CD4-positive, alpha-beta T cell (primary cell): ENCODE measurements at regions of chr9 and their contacts with region 1.

Region 1: GRCh38 chr9:94149696-94150095 is 65.4 kb downstream of the PTPDC1 start:
- DNase-seq: no peak
- ATAC-seq: no peak
- H3K4me3 ChIP-seq: no peak overlapping the region
- H3K4me3 Mint-ChIP-seq: no peak overlapping the region
- H3K27ac ChIP-seq: no peak overlapping the region
- H3K27ac Mint-ChIP-seq: no peak overlapping the region
- H3K4me1 ChIP-seq: peaks cover 4% of the 10 kb centered on the region
- H3K4me1 Mint-ChIP-seq: peaks cover 12% of the 10 kb centered on the region
- H3K27me3 ChIP-seq: no peaks in the 10 kb centered on the region
- H3K27me3 Mint-ChIP-seq: no peaks in the 10 kb centered on the region
- CTCF ChIP-seq: no peak

Region 2: DNA sequence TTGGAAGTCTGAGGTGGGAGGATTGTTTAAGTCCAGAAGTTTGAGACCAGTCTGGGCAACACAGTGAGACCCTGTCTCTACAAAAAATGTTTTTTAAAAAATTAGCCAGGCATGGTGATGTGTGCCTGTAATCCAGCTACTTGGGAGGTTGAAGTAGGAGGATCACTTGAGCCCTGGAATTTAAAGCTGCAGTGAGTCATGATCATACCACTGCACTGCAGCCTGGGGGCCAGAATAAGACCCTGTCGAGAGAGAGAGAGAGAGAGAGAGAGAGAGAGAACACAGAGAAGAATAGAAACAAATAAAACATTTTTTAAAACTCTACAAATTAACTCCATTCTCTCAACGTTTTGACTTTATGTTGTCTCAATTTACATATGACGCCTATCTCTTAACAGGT is 306.3 kb before region 1 on chr9:
- CTCF ChIA-PET with region 1: no interaction called
- POLR2A ChIA-PET with region 1: no interaction called
- intact Hi-C with region 1: no loop called
- DNase-seq: no peak
- ATAC-seq: no peak
- H3K4me3 ChIP-seq: no peak overlapping the region
- H3K4me3 Mint-ChIP-seq: no peak overlapping the region
- H3K27ac ChIP-seq: no peak overlapping the region
- H3K27ac Mint-ChIP-seq: no peak overlapping the region
- H3K4me1 ChIP-seq: no peaks in the 10 kb centered on the region
- H3K4me1 Mint-ChIP-seq: no peaks in the 10 kb centered on the region
- H3K27me3 ChIP-seq: peaks cover 4 to 5% of the 10 kb centered on the region in 2 experiments
- H3K27me3 Mint-ChIP-seq: peaks cover 61% of the 10 kb centered on the region
- CTCF ChIP-seq: no peak

Region 3: DNA sequence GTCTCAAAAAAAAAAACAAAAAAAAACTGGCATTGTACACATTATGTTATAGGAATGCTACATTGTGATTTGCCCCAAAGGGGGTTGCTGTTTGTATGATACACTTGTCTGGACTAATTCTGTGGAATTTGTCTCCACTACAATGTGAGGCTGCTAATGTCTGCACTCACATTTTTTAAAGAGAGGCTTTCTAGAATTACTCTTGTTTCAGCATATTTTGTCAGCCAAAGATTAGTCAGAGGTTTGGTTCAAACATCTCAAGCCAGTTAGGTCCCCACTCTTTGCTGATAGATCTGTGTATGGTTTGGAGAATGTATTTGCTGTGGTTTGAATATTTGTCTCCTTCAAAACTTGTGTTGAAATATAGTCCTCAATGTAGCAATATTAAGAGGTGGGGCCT is 50.1 kb after region 1 on chr9:
- CTCF ChIA-PET with region 1: no interaction called
- POLR2A ChIA-PET with region 1: no interaction called
- intact Hi-C with region 1: loop called in 1 of 2 experiments (anchors 5 kb)
- DNase-seq: no peak
- ATAC-seq: no peak
- H3K4me3 ChIP-seq: no peak overlapping the region
- H3K4me3 Mint-ChIP-seq: no peak overlapping the region
- H3K27ac ChIP-seq: no peak overlapping the region
- H3K27ac Mint-ChIP-seq: no peak overlapping the region
- H3K4me1 ChIP-seq: no peaks in the 10 kb centered on the region
- H3K4me1 Mint-ChIP-seq: no peaks in the 10 kb centered on the region
- H3K27me3 ChIP-seq: no peaks in the 10 kb centered on the region
- H3K27me3 Mint-ChIP-seq: no peaks in the 10 kb centered on the region
- CTCF ChIP-seq: no peak